RWPE1 (cell line): ENCODE measurements at regions of chr1 and their contacts with region 1.

Region 1: GRCh38 chr1:33295450-33296081 is 25.3 kb downstream of the A3GALT2 start:
- DNase-seq: peak; percentile 87
- H3K27ac ChIP-seq: peak overlapping the region; percentile 21; the same call in 1 of the 2 replicates
- CTCF ChIP-seq: peak; percentile 92

Region 2: GRCh38 chr1:33188572-33189275 is 106.8 kb before region 1 on chr1:
- CTCF ChIA-PET with region 1: no interaction called
- POLR2A ChIA-PET with region 1: no interaction called
- DNase-seq: no peak
- H3K27ac ChIP-seq: no peak overlapping the region
- CTCF ChIP-seq: no peak

Region 3: DNA sequence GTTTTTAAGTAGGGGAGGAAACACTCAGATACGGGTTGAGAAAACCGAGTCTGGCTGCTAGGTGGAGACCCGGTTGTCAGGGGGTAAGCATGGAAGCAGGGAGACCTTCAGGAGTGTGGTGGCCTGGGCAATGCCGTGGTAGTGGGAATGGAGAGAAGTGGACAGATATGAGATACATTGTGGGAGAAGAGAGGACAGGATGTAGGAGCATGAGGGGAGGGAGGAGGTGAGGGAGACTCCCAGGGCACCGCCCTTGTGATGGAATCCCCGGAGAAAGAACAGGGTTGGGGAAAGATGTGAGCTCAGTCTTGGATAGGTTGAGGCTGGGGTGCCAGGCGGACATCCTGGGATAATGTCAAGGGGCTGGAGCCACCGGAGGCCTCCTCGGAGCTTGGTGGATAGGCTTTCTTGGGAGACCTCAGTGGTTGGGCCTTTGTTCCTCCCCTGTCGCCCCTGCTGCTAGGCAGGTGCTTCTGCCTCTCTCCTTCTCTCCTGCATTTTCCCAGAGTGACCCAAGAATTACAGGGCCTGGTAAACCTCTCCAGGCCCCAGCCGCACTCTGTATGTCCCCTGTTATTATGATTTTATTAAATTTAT is 18.0 kb before region 1 on chr1:
- CTCF ChIA-PET with region 1: interaction called, 10 read pairs
- POLR2A ChIA-PET with region 1: no interaction called
- DNase-seq: no peak
- H3K27ac ChIP-seq: peak overlapping the region; percentile 2; the same call in 1 of the 2 replicates
- CTCF ChIP-seq: no peak

Region 4: GRCh38 chr1:33327587-33328315 is 32.2 kb after region 1 on chr1:
- CTCF ChIA-PET with region 1: no interaction called
- POLR2A ChIA-PET with region 1: no interaction called
- DNase-seq: peak; percentile 71
- H3K27ac ChIP-seq: peak overlapping the region; percentile 81
- CTCF ChIP-seq: no peak

Region 5: GRCh38 chr1:33410091-33410701 is 114.6 kb after region 1 on chr1:
- CTCF ChIA-PET with region 1: no interaction called
- POLR2A ChIA-PET with region 1: no interaction called
- DNase-seq: no peak
- H3K27ac ChIP-seq: no peak overlapping the region
- CTCF ChIP-seq: no peak

Region 6: GRCh38 chr1:33472349-33472980 is 176.9 kb after region 1 on chr1 and contains the start of gene ZSCAN20:
- CTCF ChIA-PET with region 1: interaction called, 15 read pairs
- POLR2A ChIA-PET with region 1: no interaction called
- DNase-seq: peak; percentile 94
- H3K27ac ChIP-seq: peak within 1 kb of the TSS; percentile 55
- CTCF ChIP-seq: no peak